Calu3 (cell line): ENCODE measurements at regions of chr9 and their contacts with region 1.

Region 1: DNA sequence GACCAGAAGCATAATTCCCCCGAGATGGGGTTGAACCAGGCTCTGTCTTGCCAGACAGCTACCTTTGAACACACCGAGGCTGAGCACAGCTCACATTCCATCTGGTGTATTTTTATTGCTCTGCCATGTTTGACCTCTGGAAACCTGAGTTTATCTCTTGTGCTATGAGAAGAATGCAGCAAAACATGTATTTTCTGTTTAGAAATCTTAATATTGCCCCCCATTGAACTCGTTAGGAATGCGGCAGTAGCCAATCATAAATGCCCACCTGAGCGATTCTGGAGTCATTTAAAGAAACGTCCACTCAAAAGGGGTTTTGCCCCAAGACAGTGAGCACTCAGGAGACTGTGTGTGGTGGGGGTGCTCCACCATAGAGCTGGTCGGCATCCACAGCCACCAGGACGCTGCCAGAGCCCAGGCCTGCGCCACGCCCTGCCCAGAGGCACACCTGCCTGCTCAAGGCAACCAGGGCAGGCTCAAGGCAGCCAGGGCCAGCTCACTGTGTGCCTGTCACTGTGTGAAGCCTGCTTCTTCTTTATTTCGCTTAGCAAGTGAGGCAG is 26.9 kb downstream of the FGD3 start:
- DNase-seq: peak; percentile 86
- H3K4me3 Mint-ChIP-seq: peak overlapping the region; percentile 68
- H3K27ac Mint-ChIP-seq: peak overlapping the region; percentile 92
- H3K4me1 Mint-ChIP-seq: peaks cover 37% of the 10 kb centered on the region
- H3K27me3 Mint-ChIP-seq: no peaks in the 10 kb centered on the region
- CTCF ChIP-seq: no peak

Region 2: GRCh38 chr9:92829420-92829819 is 144.8 kb before region 1 on chr9:
- CTCF ChIA-PET with region 1: no interaction called
- intact Hi-C with region 1: no loop called
- DNase-seq: no peak
- H3K4me3 Mint-ChIP-seq: no peak overlapping the region
- H3K27ac Mint-ChIP-seq: no peak overlapping the region
- H3K4me1 Mint-ChIP-seq: no peaks in the 10 kb centered on the region
- H3K27me3 Mint-ChIP-seq: peaks cover 11% of the 10 kb centered on the region
- CTCF ChIP-seq: no peak

Region 3: GRCh38 chr9:93003552-93004407 is 29.5 kb after region 1 on chr9:
- CTCF ChIA-PET with region 1: interaction called, 11 read pairs
- intact Hi-C with region 1: no loop called
- DNase-seq: peak; percentile 77
- H3K4me3 Mint-ChIP-seq: peak overlapping the region; percentile 67
- H3K27ac Mint-ChIP-seq: no peak overlapping the region
- H3K4me1 Mint-ChIP-seq: no peaks in the 10 kb centered on the region
- H3K27me3 Mint-ChIP-seq: no peaks in the 10 kb centered on the region
- CTCF ChIP-seq: peak; percentile 53

Region 4: DNA sequence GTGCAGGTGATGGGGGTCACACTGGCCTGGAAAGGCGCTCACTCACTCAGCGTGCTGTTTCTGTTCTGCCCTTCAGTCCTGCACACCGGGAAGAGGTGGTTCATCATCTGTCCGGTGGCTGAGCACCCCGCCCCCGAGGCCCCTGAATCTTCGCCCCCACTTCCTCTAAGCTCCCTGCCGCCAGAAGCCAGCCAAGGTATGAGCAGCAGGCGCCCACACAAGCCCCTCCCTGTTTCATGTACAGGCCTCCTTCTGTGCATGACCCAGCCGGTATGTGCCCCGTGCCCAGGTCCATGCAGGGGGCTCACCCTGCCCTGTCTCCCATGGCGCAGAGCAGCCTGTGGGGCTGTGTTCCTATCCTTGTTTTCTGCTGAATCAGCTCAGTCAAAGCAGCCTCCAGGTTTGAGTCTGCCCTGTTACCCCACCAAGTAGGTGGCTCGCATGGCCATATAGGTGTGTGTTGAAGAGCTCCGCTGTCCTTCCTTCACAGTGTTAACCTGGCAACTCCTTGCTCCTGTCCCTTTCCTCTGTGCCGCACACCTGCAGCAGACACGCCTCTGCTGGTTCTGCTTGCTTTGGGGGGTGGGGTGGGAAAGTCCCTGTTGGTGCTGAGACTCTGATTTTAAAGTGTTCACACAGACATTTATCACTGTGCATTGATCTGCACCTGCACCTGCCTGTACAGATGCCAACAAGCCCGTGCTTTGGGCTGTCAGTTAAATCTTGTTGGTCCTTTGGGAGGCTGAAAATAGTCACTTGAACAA is 294.5 kb after region 1 on chr9:
- CTCF ChIA-PET with region 1: no interaction called
- intact Hi-C with region 1: no loop called
- DNase-seq: no peak
- H3K4me3 Mint-ChIP-seq: no peak overlapping the region
- H3K27ac Mint-ChIP-seq: no peak overlapping the region
- H3K4me1 Mint-ChIP-seq: no peaks in the 10 kb centered on the region
- H3K27me3 Mint-ChIP-seq: no peaks in the 10 kb centered on the region
- CTCF ChIP-seq: no peak